Astrocyte of the spinal cord (primary cell): ENCODE measurements at regions of chr17 and their contacts with region 1.

Region 1: DNA sequence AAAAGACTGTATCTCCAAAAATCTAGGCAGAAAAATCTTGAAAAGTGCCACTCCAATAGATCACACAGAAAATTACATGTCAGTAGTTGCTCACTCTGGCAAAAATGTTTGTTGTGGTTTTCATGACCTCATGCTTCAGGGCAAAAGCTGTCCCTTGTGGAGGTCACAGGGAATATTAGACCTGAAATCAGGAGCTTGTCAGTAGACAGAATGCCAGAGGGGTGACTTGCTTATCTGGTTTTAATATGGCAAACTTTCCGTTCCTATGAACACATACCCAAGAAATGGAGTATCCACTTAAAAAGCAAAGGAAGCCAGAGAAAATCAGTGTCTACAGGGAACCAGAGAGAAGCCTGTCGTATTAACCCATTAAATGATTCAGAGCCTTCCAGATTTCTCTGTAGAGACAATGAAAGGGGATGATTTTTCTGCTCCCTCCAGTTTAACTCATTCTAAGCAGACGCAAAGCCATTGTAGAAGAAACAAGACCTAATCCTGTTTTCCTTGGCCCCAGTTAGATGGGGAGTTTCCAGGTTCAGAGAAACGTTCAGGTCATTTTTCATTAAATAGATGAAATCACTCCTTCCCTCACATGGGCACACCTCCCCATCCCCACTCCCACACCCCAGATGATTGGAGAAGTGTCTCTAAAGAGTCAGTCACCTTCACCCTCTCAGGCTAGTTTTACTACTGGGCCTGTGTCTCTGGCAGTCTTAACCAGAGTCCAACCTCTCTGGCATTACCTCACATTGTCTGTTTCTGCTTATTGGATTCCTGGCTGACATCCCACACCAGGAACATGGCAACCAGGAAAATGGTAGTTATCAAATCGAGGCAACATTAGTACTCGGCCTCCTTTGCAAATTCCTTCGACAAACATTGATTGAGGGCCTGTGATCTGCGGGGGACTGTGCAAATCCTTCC is 6.0 kb downstream of the SOX9 start:
- DNase-seq: peak; percentile 71
- H3K4me3 ChIP-seq: no peak overlapping the region
- CTCF ChIP-seq: no peak

Region 2: GRCh38 chr17:72539981-72540897 is 413.4 kb after region 1 on chr17:
- in situ Hi-C with region 1: loop called (anchors 25 kb)
- DNase-seq: peak; percentile 72
- H3K4me3 ChIP-seq: peak overlapping the region; percentile 12
- CTCF ChIP-seq: peak; percentile 78